ENCODE measurements at regions of chr14 and their contacts with region 1.

Region 1: GRCh38 chr14:101628471-101628966 is 67.2 kb downstream of the DIO3 start:
- DNase-seq: peak; percentile 53
- H3K4me3 ChIP-seq: no peak overlapping the region
- H3K27ac ChIP-seq: no peak overlapping the region
- H3K4me1 ChIP-seq: no peaks in the 10 kb centered on the region
- H3K27me3 ChIP-seq: no peaks in the 10 kb centered on the region
- CTCF ChIP-seq: peak; percentile 96 to 98 (median 98)
- POLR2A ChIP-seq: no peak

Region 2: DNA sequence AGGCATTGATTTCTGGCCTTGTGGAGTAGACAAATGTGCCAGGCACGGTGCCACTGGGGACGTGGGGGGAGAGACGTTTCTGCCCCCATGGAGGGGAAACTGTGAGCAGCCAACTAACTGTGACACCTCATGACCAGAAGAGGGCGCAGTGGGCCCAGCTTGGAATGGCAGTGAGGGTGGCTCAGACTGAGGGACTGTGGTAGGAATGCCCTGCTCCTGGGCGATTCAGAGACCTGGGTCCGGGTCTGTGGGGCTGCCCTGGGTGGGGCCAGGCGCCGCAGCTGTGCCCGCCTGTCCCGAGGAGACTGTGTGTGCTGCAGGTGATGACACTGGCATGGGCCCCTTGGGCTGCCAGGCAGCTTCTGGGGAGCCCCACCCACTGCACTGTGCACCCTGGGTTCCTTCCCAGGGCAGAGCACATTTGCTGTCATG is 1244.8 kb before region 1 on chr14:
- intact Hi-C with region 1: loop called (anchors 2 kb)
- DNase-seq: peak; percentile 63
- H3K4me3 ChIP-seq: no peak overlapping the region
- H3K27ac ChIP-seq: no peak overlapping the region
- H3K4me1 ChIP-seq: peaks cover 3% of the 10 kb centered on the region
- H3K27me3 ChIP-seq: no peaks in the 10 kb centered on the region
- CTCF ChIP-seq: peak; percentile 66 to 83 (median 76)
- POLR2A ChIP-seq: no peak

Region 3: DNA sequence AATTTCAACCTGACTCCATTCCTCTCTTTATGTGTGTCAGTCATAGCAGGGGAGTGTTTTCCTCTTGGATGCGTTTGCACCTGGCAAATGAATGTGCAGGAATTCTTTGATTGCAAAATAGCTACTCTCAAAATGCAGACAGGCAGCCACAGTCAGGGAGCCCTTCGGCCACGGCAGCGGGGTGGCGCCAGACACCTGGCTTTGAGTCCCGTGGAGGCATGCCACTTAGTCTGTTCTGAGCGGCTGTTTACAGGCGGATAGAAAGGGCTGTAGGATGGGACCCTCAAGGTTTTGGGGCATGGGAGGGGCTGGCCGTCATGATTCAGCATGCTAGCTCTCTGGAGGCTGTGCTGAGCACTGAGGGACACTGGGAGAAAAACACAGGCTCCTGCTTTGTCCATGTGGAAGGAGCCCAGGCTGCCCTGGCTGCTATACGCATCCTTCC is 1188.3 kb before region 1 on chr14:
- intact Hi-C with region 1: loop called (anchors 10 kb)
- DNase-seq: peak; percentile 87
- H3K4me3 ChIP-seq: no peak overlapping the region
- H3K27ac ChIP-seq: peak overlapping the region; percentile 1 to 36
- H3K4me1 ChIP-seq: peaks cover 12% of the 10 kb centered on the region
- H3K27me3 ChIP-seq: no peaks in the 10 kb centered on the region
- CTCF ChIP-seq: peak; percentile 43 to 94 (median 82)
- POLR2A ChIP-seq: no peak

Region 4: GRCh38 chr14:100621806-100622205 is 1006.7 kb before region 1 on chr14:
- intact Hi-C with region 1: no loop called
- DNase-seq: no peak
- H3K4me3 ChIP-seq: no peak overlapping the region
- H3K27ac ChIP-seq: no peak overlapping the region
- H3K4me1 ChIP-seq: no peaks in the 10 kb centered on the region
- H3K27me3 ChIP-seq: no peaks in the 10 kb centered on the region
- CTCF ChIP-seq: no peak
- POLR2A ChIP-seq: no peak

Region 5: GRCh38 chr14:100662879-100663760 is 965.4 kb before region 1 on chr14:
- intact Hi-C with region 1: loop called (anchors 5 kb)
- DNase-seq: peak; percentile 49
- H3K4me3 ChIP-seq: no peak overlapping the region
- H3K27ac ChIP-seq: no peak overlapping the region
- H3K4me1 ChIP-seq: peaks cover 10% of the 10 kb centered on the region
- H3K27me3 ChIP-seq: no peaks in the 10 kb centered on the region
- CTCF ChIP-seq: peak; percentile 84 to 94 (median 89)
- POLR2A ChIP-seq: no peak

Region 6: GRCh38 chr14:100709289-100710284 is 918.9 kb before region 1 on chr14:
- intact Hi-C with region 1: loop called (anchors 5 kb)
- DNase-seq: no peak
- H3K4me3 ChIP-seq: no peak overlapping the region
- H3K27ac ChIP-seq: no peak overlapping the region
- H3K4me1 ChIP-seq: no peaks in the 10 kb centered on the region
- H3K27me3 ChIP-seq: no peaks in the 10 kb centered on the region
- CTCF ChIP-seq: peak in 3 of 4 experiments; percentile 27 to 72 (median 71)
- POLR2A ChIP-seq: no peak

Region 7: DNA sequence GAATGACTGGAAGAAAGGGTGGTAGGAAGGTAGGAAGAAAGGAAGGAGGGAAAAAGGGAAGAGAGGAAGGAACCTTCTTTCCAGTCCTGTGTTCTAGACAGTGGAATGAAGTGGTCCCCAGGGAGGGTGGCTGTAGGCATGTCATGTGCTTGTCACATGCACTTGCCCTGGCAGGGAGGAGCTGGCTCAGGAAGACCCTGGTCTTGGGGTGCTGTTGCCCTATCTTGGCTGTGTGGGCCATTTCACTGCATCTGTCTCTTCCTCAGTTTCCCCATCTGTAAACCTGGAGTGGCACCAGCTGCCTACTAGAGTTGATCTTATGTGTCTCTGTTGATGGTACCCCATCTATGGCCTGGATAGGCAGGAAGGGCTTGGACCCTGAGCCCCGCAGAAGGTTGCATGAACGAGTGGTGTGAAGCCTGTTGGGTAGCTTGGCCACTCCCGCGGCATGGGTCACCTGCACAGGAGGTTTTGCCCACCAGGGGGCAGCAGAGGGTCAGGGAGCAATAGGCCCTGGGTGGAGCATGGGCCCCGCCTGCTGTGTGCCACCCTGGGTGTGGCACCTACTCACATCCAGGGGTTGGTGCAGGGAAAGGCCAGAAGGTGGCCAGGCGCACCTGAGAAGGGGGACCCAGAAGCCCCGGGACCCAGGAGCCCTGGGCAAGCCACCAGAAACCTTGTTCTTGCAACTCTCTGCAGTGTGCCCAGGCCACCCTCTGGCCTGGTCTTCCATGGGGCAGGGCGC is 777.5 kb before region 1 on chr14:
- intact Hi-C with region 1: loop called (anchors 2 kb)
- DNase-seq: peak; percentile 56
- H3K4me3 ChIP-seq: no peak overlapping the region
- H3K27ac ChIP-seq: no peak overlapping the region
- H3K4me1 ChIP-seq: no peaks in the 10 kb centered on the region
- H3K27me3 ChIP-seq: no peaks in the 10 kb centered on the region
- CTCF ChIP-seq: peak; percentile 68 to 88 (median 72)
- POLR2A ChIP-seq: no peak

Region 8: DNA sequence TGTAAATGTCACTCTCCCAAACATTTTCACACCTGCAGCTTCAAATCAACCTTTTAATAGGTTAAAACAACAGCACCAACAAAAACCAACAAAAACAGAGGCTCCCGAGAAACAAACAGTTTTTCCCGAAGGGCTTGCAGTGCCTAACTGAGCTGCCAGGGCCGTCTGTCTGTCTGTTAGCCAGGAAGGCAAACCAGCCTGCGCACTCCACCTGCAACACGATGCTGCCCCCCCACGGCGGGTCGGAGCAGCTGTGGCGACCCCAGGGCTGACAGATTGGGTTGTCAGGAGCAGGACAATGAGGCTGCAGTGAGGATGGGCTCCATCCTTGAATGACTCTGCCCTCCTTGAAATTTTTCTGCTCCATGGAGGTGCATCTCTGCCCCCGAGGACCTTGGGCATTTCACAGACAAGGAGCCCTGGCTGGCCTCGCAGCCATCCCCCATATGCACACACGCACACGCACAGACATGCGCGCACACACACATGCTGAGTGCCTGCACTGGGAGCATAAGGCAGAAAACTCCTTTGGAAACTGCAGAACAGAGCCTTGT is 727.6 kb before region 1 on chr14:
- intact Hi-C with region 1: loop called (anchors 5 kb)
- DNase-seq: peak; percentile 28
- H3K4me3 ChIP-seq: no peak overlapping the region
- H3K27ac ChIP-seq: no peak overlapping the region
- H3K4me1 ChIP-seq: peaks cover 15% of the 10 kb centered on the region
- H3K27me3 ChIP-seq: no peaks in the 10 kb centered on the region
- CTCF ChIP-seq: peak in 1 of 4 experiments; percentile 41
- POLR2A ChIP-seq: no peak